Endothelial cell of umbilical vein (primary cell): ENCODE measurements at regions of chr5 and their contacts with region 1.

Region 1: GRCh38 chr5:169583424-169584204 is at the start of gene SPDL1:
- DNase-seq: peak; percentile 98
- H3K4me3 ChIP-seq: peak within 1 kb of the TSS; percentile 48 to 96 (median 92)
- H3K27ac ChIP-seq: peak within 1 kb of the TSS; percentile 52
- H3K4me1 ChIP-seq: peaks cover 24% of the 10 kb centered on the region
- H3K27me3 ChIP-seq: peaks cover 0 to 4% of the 10 kb centered on the region in 2 experiments
- CTCF ChIP-seq: no peak
- POLR2A ChIP-seq: peak; percentile 92
- total RNA-seq, gene SPDL1: 46.8 and 51.8 TPM in 2 replicates

Region 2: DNA sequence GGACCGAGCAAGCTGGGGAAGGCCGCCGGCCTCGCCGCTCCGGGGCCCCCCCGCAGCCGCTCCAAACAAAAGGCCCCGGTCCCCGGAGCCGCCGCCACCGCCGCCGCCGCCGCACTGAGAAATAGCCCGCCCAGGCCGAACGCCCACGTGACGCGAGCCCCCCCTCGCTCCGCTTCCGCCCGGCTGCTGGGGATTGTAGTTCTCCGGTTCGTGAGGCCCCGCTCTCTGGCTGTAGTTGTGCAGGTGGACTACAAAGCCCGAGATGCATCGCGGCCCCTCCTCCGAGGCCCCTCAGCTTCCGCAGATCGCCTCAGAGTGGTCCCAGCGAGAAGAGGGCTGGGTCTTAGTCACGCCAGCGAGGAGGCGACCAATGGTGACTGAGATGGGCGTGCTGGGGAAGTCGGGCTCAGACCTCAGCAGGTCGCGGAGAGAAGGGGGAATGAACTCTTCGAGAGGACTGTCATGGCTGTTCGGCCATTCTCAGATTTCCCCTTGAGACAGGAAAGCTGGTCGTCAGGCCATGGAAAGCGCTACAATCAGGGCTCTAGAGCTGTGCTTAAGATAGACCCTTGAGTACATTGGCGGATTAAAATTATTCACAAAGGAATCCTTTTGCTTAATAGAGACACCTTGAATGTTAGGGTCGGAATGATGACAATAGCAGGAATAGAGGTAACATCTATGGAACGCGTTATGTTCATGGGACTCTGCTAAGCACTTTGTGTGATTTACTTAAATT is 1004.0 kb before region 1 on chr5:
- CTCF ChIA-PET with region 1: no interaction called
- POLR2A ChIA-PET with region 1: no interaction called
- dilution Hi-C with region 1: no loop called
- intact Hi-C with region 1: loop called (anchors 2 kb)
- DNase-seq: peak; percentile 99
- H3K4me3 ChIP-seq: peak overlapping the region in 2 of 3 experiments; percentile 80 to 100
- H3K27ac ChIP-seq: peak overlapping the region; percentile 92
- H3K4me1 ChIP-seq: peaks cover 24% of the 10 kb centered on the region
- H3K27me3 ChIP-seq: no peaks in the 10 kb centered on the region
- CTCF ChIP-seq: no peak
- POLR2A ChIP-seq: peak; percentile 92

Region 3: GRCh38 chr5:168987543-168988300 is 595.9 kb before region 1 on chr5:
- CTCF ChIA-PET with region 1: interaction called, 81 read pairs
- POLR2A ChIA-PET with region 1: no interaction called
- dilution Hi-C with region 1: no loop called
- intact Hi-C with region 1: loop called (anchors 1 kb)
- DNase-seq: peak; percentile 67
- H3K4me3 ChIP-seq: no peak overlapping the region
- H3K27ac ChIP-seq: no peak overlapping the region
- H3K4me1 ChIP-seq: no peaks in the 10 kb centered on the region
- H3K27me3 ChIP-seq: peaks cover 0 to 6% of the 10 kb centered on the region in 2 experiments
- CTCF ChIP-seq: peak; percentile 67 to 81
- POLR2A ChIP-seq: no peak

Region 4: GRCh38 chr5:169265888-169266287 is 317.7 kb before region 1 on chr5:
- CTCF ChIA-PET with region 1: interaction called, 3 read pairs
- POLR2A ChIA-PET with region 1: no interaction called
- dilution Hi-C with region 1: no loop called
- intact Hi-C with region 1: loop called (anchors 1 kb)
- DNase-seq: peak; percentile 24
- H3K4me3 ChIP-seq: no peak overlapping the region
- H3K27ac ChIP-seq: no peak overlapping the region
- H3K4me1 ChIP-seq: no peaks in the 10 kb centered on the region
- H3K27me3 ChIP-seq: no peaks in the 10 kb centered on the region
- CTCF ChIP-seq: peak in 1 of 2 donors; percentile 10
- POLR2A ChIP-seq: no peak

Region 5: GRCh38 chr5:169695919-169696490 is 112.4 kb after region 1 on chr5:
- CTCF ChIA-PET with region 1: interaction called, 4 read pairs
- POLR2A ChIA-PET with region 1: no interaction called
- dilution Hi-C with region 1: no loop called
- intact Hi-C with region 1: loop called (anchors 1 kb)
- DNase-seq: peak; percentile 96
- H3K4me3 ChIP-seq: no peak overlapping the region
- H3K27ac ChIP-seq: peak overlapping the region; percentile 98
- H3K4me1 ChIP-seq: peaks cover 30% of the 10 kb centered on the region
- H3K27me3 ChIP-seq: no peaks in the 10 kb centered on the region
- CTCF ChIP-seq: no peak
- POLR2A ChIP-seq: peak; percentile 74

Region 6: GRCh38 chr5:170216266-170216864 is 632.8 kb after region 1 on chr5:
- CTCF ChIA-PET with region 1: interaction called, 19 read pairs
- POLR2A ChIA-PET with region 1: no interaction called
- dilution Hi-C with region 1: no loop called
- intact Hi-C with region 1: loop called (anchors 5 kb)
- DNase-seq: peak; percentile 73
- H3K4me3 ChIP-seq: no peak overlapping the region
- H3K27ac ChIP-seq: no peak overlapping the region
- H3K4me1 ChIP-seq: peaks cover 30% of the 10 kb centered on the region
- H3K27me3 ChIP-seq: no peaks in the 10 kb centered on the region
- CTCF ChIP-seq: peak; percentile 66 to 69
- POLR2A ChIP-seq: no peak